Sigmoid colon (tissue), 7 donors: ENCODE measurements at regions of chr9 and their contacts with region 1.

Region 1: GRCh38 chr9:16571127-16571802 is 299.2 kb downstream of the BNC2 start:
- DNase-seq: no peak
- H3K4me3 ChIP-seq: no peak overlapping the region
- H3K27ac ChIP-seq: peak overlapping the region in 2 of 4 donors; percentile 20 to 31
- H3K4me1 ChIP-seq: peaks cover 0 to 64% (median 53%) of the 10 kb centered on the region in 4 donors
- H3K27me3 ChIP-seq: no peaks in the 10 kb centered on the region
- CTCF ChIP-seq: no peak
- EP300 ChIP-seq: no peak
- POLR2A ChIP-seq: no peak

Region 2: DNA sequence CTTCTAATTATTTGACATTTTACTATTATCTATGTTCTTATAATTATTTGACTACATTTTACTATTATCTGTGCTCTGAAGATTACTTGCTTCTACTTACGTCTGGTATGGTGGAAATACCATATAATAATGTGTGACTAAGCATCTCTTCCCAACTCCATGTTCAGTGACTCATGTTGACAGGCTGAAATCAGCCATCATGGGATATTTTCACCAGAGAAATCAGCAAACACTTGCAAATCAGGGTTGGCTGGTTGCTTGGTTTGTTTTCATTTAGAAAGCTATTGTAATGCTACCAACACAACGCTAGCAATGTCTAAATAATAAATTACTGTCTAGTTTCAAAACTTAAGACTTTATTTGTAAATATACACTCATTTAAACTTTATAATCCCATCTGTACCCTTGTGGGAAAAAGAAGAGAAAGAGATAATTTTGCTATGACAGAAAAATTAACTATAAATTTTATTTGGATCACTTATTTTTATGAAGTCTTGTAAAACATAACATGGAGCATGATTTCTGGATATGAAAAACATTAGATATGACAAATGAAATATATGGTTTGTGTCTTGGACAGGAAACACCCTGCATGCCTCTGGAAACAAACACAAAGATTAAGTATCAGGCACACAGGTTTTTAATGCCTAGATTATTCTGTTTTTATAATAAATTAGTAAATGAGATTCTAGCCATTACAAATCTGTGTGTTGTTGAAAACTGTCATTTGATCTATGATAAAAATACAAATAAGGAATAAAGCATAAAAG is 38.4 kb before region 1 on chr9:
- intact Hi-C with region 1: loop called (anchors 5 kb)
- DNase-seq: no peak
- H3K4me3 ChIP-seq: no peak overlapping the region
- H3K27ac ChIP-seq: peak overlapping the region in 2 of 4 donors; percentile 54 to 61
- H3K4me1 ChIP-seq: peaks cover 0 to 73% (median 43%) of the 10 kb centered on the region in 4 donors
- H3K27me3 ChIP-seq: no peaks in the 10 kb centered on the region
- CTCF ChIP-seq: no peak
- EP300 ChIP-seq: no peak
- POLR2A ChIP-seq: no peak

Region 3: DNA sequence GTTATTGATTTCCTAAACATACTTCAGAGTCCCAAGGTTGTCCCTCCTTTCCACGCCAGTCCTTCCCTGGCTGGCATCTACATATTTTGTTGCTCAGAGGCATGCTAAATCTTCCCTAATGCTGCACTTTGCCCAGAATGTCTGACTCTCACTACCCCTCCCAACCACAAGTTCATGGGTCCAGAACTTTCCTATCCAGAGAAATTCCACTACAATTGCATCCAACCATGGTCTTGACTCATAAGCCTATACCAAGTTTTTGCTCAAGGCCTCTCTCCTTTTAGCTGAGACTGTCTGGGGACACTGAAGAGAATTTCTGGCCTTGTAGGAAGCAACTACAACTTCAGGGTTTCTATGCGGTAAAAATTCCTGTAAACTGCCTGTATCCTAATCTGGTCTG is 92.9 kb after region 1 on chr9:
- intact Hi-C with region 1: no loop called
- DNase-seq: no peak
- H3K4me3 ChIP-seq: no peak overlapping the region
- H3K27ac ChIP-seq: no peak overlapping the region
- H3K4me1 ChIP-seq: peaks cover 0 to 17% (median 6%) of the 10 kb centered on the region in 4 donors
- H3K27me3 ChIP-seq: no peaks in the 10 kb centered on the region
- CTCF ChIP-seq: no peak
- EP300 ChIP-seq: no peak
- POLR2A ChIP-seq: no peak